ENCODE measurements at regions of chr2 and their contacts with region 1.

Region 1: DNA sequence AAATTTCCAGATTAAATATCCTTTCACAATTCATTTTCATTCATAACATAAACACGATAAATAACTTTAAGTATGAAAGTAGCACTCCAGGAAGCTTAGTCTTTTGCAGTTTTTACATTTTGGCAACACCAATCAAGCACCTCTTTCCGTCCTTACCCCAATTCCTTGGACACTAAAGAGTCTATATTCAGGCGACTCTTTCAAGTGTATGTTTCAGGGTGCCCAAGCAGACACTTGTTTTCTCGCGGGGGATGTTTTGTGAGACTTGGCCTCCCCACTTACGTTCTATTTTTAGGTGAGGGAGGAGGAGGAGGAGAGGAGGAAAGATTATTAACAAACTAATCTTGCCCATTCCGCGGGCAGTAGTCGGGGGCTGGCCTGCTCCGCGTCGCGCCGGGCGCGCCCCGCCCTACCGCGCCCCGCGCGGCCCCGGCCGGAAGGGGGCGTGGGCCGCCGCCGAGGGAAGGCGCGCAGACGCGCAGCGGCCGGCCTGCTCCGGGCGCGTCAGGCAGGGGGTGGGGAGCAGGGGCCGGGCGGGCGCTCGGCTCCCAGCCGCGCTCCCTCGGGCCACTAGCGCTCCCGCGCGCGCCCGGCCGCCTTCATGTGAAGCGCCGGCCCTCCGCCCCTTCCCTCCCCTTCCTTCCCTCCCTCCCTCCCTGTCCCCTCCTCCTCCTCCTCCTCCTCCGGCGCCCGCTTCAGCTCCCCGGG is at the start of gene ITPRID2:
- DNase-seq: peak; percentile 66 to 73
- ATAC-seq: peak; percentile 75 to 78
- H3K4me3 ChIP-seq: peak within 1 kb of the TSS; percentile 81 to 96 (median 84)
- H3K27ac ChIP-seq: peak within 1 kb of the TSS; percentile 98 to 99 (median 98)
- H3K4me1 ChIP-seq: peaks cover 33 to 46% of the 10 kb centered on the region in 2 donors
- H3K27me3 ChIP-seq: no peaks in the 10 kb centered on the region
- CTCF ChIP-seq: peak in 4 of 5 experiments; percentile 32 to 57 (median 38)
- POLR2A ChIP-seq: peak in 1 of 2 donors; percentile 58
- total RNA-seq, gene ITPRID2: 38.7 to 91.9 (median 42.5) TPM

Region 2: GRCh38 chr2:180006781-180007579 is 1884.4 kb before region 1 on chr2 and contains the start of gene CWC22:
- in situ Hi-C with region 1: no loop called
- intact Hi-C with region 1: loop called (anchors 5 kb)
- DNase-seq: peak; percentile 78 to 85
- ATAC-seq: peak; percentile 99 to 100
- H3K4me3 ChIP-seq: peak within 1 kb of the TSS; percentile 84 to 99 (median 96)
- H3K27ac ChIP-seq: peak within 1 kb of the TSS; percentile 90 to 97 (median 91)
- H3K4me1 ChIP-seq: peaks cover 18 to 19% of the 10 kb centered on the region in 2 donors
- H3K27me3 ChIP-seq: no peaks in the 10 kb centered on the region
- CTCF ChIP-seq: no peak
- POLR2A ChIP-seq: peak in 1 of 2 donors; percentile 27
- total RNA-seq, gene CWC22: 9.7 to 15.6 (median 12.8) TPM

Region 3: DNA sequence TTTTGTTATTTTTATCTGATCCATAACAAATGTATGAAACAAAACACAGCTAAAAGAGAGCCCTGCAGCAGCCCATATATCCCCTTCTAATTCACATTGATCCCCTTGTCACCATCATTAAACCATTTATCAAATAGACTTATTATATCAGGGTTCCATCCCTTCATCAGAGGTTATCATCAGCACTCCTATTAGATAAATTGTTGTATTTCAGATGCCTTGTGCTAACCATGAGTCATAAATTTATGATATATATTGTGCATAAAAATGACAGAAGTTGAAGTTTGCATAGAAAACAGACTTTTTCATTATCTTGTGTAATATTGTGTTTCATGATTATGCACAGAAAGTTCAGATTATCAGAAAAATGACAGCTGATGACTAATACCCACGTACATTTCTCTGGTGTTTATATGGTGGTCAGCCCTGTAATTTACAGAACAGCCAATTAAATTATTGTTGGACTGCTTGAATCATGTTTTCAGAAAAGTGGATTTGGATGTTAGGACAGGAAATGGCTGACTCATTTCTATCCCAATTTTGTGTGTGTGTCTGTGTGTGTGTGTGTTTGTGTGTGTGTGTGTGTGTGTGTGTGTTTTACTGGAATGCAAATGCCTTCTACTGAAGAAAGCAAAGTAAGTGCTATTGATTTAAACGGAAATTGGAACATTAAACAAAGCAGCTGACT is 175.1 kb after region 1 on chr2:
- in situ Hi-C with region 1: no loop called
- intact Hi-C with region 1: loop called (anchors 10 kb)
- DNase-seq: no peak
- ATAC-seq: no peak
- H3K4me3 ChIP-seq: no peak overlapping the region
- H3K27ac ChIP-seq: no peak overlapping the region
- H3K4me1 ChIP-seq: peaks cover 5 to 22% of the 10 kb centered on the region in 2 donors
- H3K27me3 ChIP-seq: no peaks in the 10 kb centered on the region
- CTCF ChIP-seq: no peak
- POLR2A ChIP-seq: no peak

Region 4: DNA sequence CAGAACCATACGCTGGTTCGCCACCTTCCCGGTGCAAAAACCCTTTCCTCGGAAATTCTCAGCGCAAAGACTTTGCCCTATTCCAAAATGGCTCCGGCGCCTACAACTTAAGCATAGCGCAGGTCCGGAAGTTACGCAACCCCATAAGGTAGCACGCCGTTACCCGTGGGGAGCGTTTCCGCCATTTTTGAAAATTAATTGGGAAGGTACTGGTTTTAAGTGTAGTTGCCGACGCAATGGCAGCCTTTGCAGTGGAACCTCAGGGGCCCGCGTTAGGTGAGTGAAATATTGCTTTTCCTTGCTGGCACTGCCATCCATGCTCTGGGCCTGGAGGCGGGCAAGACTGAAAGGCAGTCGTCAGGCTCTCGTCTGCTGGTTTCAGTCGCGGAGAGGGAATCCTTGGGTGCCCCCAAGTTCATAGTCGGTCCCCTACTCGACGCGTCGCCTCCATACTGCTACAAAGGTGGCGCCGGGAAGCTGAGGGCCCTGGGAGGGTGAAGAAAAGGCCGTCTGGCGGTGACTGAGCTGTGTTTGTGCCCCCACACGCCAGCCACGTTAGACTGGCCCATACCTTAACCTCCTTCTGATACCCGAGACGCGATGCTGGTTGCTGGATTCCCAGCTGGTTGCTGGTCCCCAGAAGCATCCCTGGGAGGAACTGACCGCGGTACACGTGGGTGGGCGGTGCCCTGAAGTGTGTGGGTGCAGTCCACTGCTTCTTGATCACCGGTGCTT is 1233.0 kb after region 1 on chr2 and contains the start of gene NUP35:
- in situ Hi-C with region 1: no loop called
- intact Hi-C with region 1: loop called (anchors 10 kb)
- DNase-seq: peak; percentile 66 to 76
- ATAC-seq: peak; percentile 99
- H3K4me3 ChIP-seq: peak within 1 kb of the TSS; percentile 78 to 99 (median 82)
- H3K27ac ChIP-seq: peak within 1 kb of the TSS; percentile 85 to 90 (median 88)
- H3K4me1 ChIP-seq: peaks cover 12 to 16% of the 10 kb centered on the region in 2 donors
- H3K27me3 ChIP-seq: no peaks in the 10 kb centered on the region
- CTCF ChIP-seq: no peak
- POLR2A ChIP-seq: no peak
- total RNA-seq, gene NUP35: 3.6 to 9.7 (median 5.6) TPM